Activated naive CD4-positive, alpha-beta T cell treated with anti-CD3 and anti-CD28 coated beads for 36 hours (primary cell): ENCODE measurements at regions of chr19 and their contacts with region 1.

Region 1: DNA sequence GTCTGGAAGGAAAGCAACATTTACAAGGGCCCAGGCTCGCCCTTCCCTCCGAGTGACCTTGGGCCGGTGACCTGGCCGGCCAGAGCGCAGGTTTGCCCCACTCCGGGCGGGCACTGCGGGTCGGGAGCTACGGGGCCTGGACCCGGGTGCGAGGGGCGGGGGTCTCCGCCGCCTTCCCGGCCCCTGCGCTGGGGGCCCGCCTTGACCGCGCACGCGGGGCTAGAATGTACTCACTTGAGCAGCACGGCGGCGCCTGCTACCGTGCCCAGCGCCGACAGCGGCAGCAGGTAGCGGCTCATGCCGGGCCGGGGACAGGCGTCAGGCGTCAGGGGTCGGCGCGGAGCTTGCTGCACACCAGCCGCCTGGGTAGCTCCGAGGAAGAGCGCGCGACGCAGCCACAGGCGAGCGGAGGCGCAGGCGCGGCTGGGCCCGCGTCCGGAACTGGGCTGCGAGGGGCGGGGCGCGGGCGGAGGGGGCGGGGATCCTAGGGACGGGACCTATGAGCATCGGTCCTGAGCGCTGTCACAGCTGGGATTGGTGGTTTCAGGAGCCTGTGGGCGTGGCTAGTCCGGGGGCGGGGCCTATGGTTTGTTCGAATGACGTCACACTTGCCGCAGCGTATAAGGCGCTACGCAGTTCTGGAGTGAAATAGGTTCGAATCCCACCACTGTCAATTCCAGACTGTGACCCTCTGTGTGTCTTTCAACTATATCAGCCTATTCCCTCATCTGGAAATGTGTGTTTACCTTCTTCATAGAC is at the start of gene RDH13:
- DNase-seq: peak; percentile 99
- H3K4me3 Mint-ChIP-seq: peak within 1 kb of the TSS; percentile 84
- H3K27ac Mint-ChIP-seq: no peak within 1 kb of the TSS
- H3K4me1 Mint-ChIP-seq: peaks cover 18% of the 10 kb centered on the region
- H3K27me3 Mint-ChIP-seq: peaks cover 24% of the 10 kb centered on the region
- total RNA-seq, gene RDH13: 8.7 to 8.9 TPM

Region 2: GRCh38 chr19:55005684-55006488 is 57.0 kb before region 1 on chr19:
- CTCF ChIA-PET with region 1: no interaction called
- intact Hi-C with region 1: loop called (anchors 2 kb)
- DNase-seq: peak; percentile 66
- H3K4me3 Mint-ChIP-seq: peak overlapping the region; percentile 81
- H3K27ac Mint-ChIP-seq: peak overlapping the region; percentile 77
- H3K4me1 Mint-ChIP-seq: peaks cover 23% of the 10 kb centered on the region
- H3K27me3 Mint-ChIP-seq: peaks cover 18% of the 10 kb centered on the region

Region 3: GRCh38 chr19:55080968-55081772 is 18.3 kb after region 1 on chr19:
- CTCF ChIA-PET with region 1: no interaction called
- intact Hi-C with region 1: loop called (anchors 1 kb)
- DNase-seq: peak; percentile 92
- H3K4me3 Mint-ChIP-seq: peak overlapping the region; percentile 73
- H3K27ac Mint-ChIP-seq: no peak overlapping the region
- H3K4me1 Mint-ChIP-seq: peaks cover 25% of the 10 kb centered on the region
- H3K27me3 Mint-ChIP-seq: peaks cover 68% of the 10 kb centered on the region

Region 4: GRCh38 chr19:55516878-55517620 is 454.1 kb after region 1 on chr19:
- CTCF ChIA-PET with region 1: no interaction called
- intact Hi-C with region 1: no loop called
- DNase-seq: peak; percentile 93
- H3K4me3 Mint-ChIP-seq: peak overlapping the region; percentile 59
- H3K27ac Mint-ChIP-seq: no peak overlapping the region
- H3K4me1 Mint-ChIP-seq: peaks cover 3% of the 10 kb centered on the region
- H3K27me3 Mint-ChIP-seq: peaks cover 1% of the 10 kb centered on the region